ENCODE measurements at regions of chr5 and their contacts with region 1.

Region 1: GRCh38 chr5:170225326-170226128 is 7.3 kb upstream of the C5orf58 start:
- DNase-seq: peak; percentile 62
- H3K4me3 Mint-ChIP-seq: no peak overlapping the region
- H3K27ac Mint-ChIP-seq: peak overlapping the region; percentile 55
- H3K4me1 Mint-ChIP-seq: peaks cover 5% of the 10 kb centered on the region
- H3K27me3 Mint-ChIP-seq: peaks cover 2% of the 10 kb centered on the region

Region 2: DNA sequence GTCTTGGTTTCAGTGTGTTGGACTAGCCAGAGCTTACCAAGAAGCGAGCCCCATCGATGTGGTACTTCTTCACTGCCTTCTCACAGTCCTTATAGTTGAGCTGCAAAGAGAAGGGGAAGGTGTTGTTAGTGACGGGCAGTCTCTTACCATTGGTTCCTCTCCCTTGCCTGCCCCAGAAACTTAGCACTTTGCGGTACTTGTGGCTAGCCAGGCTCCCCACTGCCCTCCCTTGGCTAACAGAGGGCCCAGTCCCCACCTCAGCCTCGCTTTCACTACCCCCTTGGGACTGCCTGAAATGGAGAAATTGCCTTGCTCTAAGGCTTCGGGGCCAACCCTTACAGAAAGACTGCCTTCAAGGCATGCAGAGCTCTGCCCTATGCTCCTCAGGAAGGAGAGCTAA is 67.7 kb after region 1 on chr5:
- intact Hi-C with region 1: loop called (anchors 2 kb)
- DNase-seq: no peak
- H3K4me3 Mint-ChIP-seq: peak overlapping the region; percentile 99
- H3K27ac Mint-ChIP-seq: peak overlapping the region; percentile 87
- H3K4me1 Mint-ChIP-seq: peaks cover 79% of the 10 kb centered on the region
- H3K27me3 Mint-ChIP-seq: no peaks in the 10 kb centered on the region

Region 3: GRCh38 chr5:170338933-170339779 is 113.6 kb after region 1 on chr5:
- intact Hi-C with region 1: loop called (anchors 1 kb)
- DNase-seq: peak; percentile 45
- H3K4me3 Mint-ChIP-seq: no peak overlapping the region
- H3K27ac Mint-ChIP-seq: peak overlapping the region; percentile 63
- H3K4me1 Mint-ChIP-seq: peaks cover 20% of the 10 kb centered on the region
- H3K27me3 Mint-ChIP-seq: peaks cover 4% of the 10 kb centered on the region

Region 4: GRCh38 chr5:170420780-170421412 is 195.4 kb after region 1 on chr5:
- intact Hi-C with region 1: loop called (anchors 1 kb)
- DNase-seq: peak; percentile 20
- H3K4me3 Mint-ChIP-seq: no peak overlapping the region
- H3K27ac Mint-ChIP-seq: no peak overlapping the region
- H3K4me1 Mint-ChIP-seq: no peaks in the 10 kb centered on the region
- H3K27me3 Mint-ChIP-seq: peaks cover 25% of the 10 kb centered on the region

Region 5: GRCh38 chr5:170623576-170624181 is 398.2 kb after region 1 on chr5:
- intact Hi-C with region 1: loop called (anchors 5 kb)
- DNase-seq: no peak
- H3K4me3 Mint-ChIP-seq: no peak overlapping the region
- H3K27ac Mint-ChIP-seq: no peak overlapping the region
- H3K4me1 Mint-ChIP-seq: no peaks in the 10 kb centered on the region
- H3K27me3 Mint-ChIP-seq: peaks cover 2% of the 10 kb centered on the region